Adrenal gland (tissue), 19 donors: ENCODE measurements at regions of chr14 and their contacts with region 1.

Region 1: GRCh38 chr14:39432179-39432618 is at the start of gene FBXO33:
- DNase-seq: peak; percentile 97 to 98 (median 97)
- H3K4me3 ChIP-seq: peak within 1 kb of the TSS; percentile 62 to 90 (median 86)
- H3K27ac ChIP-seq: peak within 1 kb of the TSS; percentile 96 to 100 (median 99)
- H3K4me1 ChIP-seq: peaks cover 26 to 40% of the 10 kb centered on the region in 2 donors
- H3K27me3 ChIP-seq: no peaks in the 10 kb centered on the region
- CTCF ChIP-seq: no peak
- POLR2A ChIP-seq: no peak
- total RNA-seq, gene FBXO33: 13.5 to 23.2 (median 21.3) TPM

Region 2: DNA sequence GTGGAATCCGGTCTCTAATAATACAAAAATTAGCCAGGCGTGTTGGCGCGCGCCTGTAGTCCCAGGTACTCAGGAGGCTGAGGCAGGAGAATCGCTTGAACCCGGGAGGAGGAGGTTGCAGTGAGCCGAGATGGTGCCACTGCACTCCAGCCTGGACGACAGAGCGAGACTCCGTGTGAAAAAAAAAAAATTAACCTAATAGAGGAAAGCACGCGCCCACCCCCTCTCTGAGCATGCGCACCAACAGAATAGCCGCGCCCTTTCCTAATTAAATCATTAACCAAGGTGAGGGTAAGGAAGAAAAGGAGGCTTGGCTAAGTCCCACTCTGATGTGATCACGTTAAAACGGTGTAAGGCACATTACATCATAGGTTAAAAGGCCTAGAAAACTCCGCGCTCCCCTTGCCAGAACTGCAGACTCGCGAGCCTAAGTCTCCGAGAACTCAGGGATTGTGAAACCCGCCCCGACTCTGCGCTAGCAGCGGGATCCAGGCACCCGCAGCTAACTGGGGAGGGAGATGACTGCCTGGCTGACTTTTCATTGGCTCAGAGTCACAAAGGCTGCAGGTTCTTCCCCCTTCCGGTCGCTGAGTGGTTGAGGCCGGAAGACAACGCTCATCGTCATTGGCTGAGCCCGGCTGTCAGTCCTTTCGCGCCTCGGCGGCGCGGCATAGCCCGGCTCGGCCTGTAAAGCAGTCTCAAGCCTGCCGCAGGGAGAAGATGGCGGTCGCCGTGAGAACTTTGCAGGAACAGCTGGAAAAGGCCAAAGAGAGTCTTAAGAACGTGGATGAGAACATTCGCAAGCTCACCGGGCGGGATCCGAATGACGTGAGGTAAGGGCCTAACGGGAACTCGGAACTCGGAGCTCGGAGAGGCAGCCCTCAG is 257.4 kb before region 1 on chr14 and contains the start of gene PNN:
- intact Hi-C with region 1: loop called in 1 of 2 experiments (anchors 10 kb)
- DNase-seq: peak; percentile 96 to 99 (median 99)
- H3K4me3 ChIP-seq: peak within 1 kb of the TSS; percentile 82 to 89 (median 86)
- H3K27ac ChIP-seq: peak within 1 kb of the TSS; percentile 89 to 97 (median 94)
- H3K4me1 ChIP-seq: peaks cover 6 to 24% of the 10 kb centered on the region in 2 donors
- H3K27me3 ChIP-seq: no peaks in the 10 kb centered on the region
- CTCF ChIP-seq: peak in 2 of 6 experiments; percentile 7 to 21
- POLR2A ChIP-seq: peak; percentile 91 to 98
- total RNA-seq, gene PNN: 11.3 to 48.4 (median 38.6) TPM

Region 3: GRCh38 chr14:39683691-39684090 is 251.5 kb after region 1 on chr14:
- intact Hi-C with region 1: no loop called
- DNase-seq: no peak
- H3K4me3 ChIP-seq: no peak overlapping the region
- H3K27ac ChIP-seq: no peak overlapping the region
- H3K4me1 ChIP-seq: no peaks in the 10 kb centered on the region
- H3K27me3 ChIP-seq: no peaks in the 10 kb centered on the region
- CTCF ChIP-seq: no peak
- POLR2A ChIP-seq: no peak